MCF 10A (cell line): ENCODE measurements at regions of chr7 and their contacts with region 1.

Region 1: GRCh38 chr7:23247603-23248335 is 1.2 kb downstream of the GPNMB start:
- DNase-seq: no peak
- H3K4me3 Mint-ChIP-seq: no peak overlapping the region
- H3K27ac Mint-ChIP-seq: no peak overlapping the region
- H3K4me1 Mint-ChIP-seq: peaks cover 13% of the 10 kb centered on the region
- H3K27me3 Mint-ChIP-seq: no peaks in the 10 kb centered on the region
- CTCF ChIP-seq: no peak

Region 2: GRCh38 chr7:23237000-23237399 is 10.8 kb before region 1 on chr7:
- CTCF ChIA-PET with region 1: no interaction called
- POLR2A ChIA-PET with region 1: interaction called, 12 read pairs
- intact Hi-C with region 1: no loop called
- DNase-seq: no peak
- H3K4me3 Mint-ChIP-seq: no peak overlapping the region
- H3K27ac Mint-ChIP-seq: no peak overlapping the region
- H3K4me1 Mint-ChIP-seq: peaks cover 7% of the 10 kb centered on the region
- H3K27me3 Mint-ChIP-seq: no peaks in the 10 kb centered on the region
- CTCF ChIP-seq: no peak

Region 3: GRCh38 chr7:23833405-23833804 is 585.6 kb after region 1 on chr7:
- CTCF ChIA-PET with region 1: no interaction called
- POLR2A ChIA-PET with region 1: no interaction called
- intact Hi-C with region 1: no loop called
- DNase-seq: no peak
- H3K4me3 Mint-ChIP-seq: no peak overlapping the region
- H3K27ac Mint-ChIP-seq: no peak overlapping the region
- H3K4me1 Mint-ChIP-seq: no peaks in the 10 kb centered on the region
- H3K27me3 Mint-ChIP-seq: no peaks in the 10 kb centered on the region
- CTCF ChIP-seq: no peak